Right ventricle myocardium inferior (tissue), 1 donor: ENCODE measurements at regions of chr17 and their contacts with region 1.

Region 1: GRCh38 chr17:48892940-48893645 is 506 bp downstream of the ATP5MC1 start:
- DNase-seq: no peak
- ATAC-seq: no peak

Region 2: DNA sequence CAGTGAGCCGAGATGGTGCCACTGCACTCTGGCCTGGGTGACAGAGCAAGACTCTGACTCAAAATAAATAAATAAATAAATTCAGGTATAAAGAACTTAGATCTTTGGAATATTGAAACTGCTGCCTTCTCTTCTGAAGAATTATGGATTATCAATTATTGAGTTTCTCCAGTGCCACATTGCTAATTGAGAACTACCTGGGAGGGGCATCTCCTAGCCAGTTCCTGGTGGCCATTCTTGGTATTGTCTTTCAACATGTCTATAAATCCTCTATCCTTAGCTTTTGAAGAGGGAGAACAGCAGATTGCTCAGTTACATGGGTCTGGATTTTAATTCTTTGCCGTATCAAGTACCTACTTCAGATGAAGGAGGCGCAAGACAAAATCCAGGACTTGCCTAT is 33.1 kb before region 1 on chr17:
- intact Hi-C with region 1: no loop called
- DNase-seq: no peak
- ATAC-seq: no peak

Region 3: DNA sequence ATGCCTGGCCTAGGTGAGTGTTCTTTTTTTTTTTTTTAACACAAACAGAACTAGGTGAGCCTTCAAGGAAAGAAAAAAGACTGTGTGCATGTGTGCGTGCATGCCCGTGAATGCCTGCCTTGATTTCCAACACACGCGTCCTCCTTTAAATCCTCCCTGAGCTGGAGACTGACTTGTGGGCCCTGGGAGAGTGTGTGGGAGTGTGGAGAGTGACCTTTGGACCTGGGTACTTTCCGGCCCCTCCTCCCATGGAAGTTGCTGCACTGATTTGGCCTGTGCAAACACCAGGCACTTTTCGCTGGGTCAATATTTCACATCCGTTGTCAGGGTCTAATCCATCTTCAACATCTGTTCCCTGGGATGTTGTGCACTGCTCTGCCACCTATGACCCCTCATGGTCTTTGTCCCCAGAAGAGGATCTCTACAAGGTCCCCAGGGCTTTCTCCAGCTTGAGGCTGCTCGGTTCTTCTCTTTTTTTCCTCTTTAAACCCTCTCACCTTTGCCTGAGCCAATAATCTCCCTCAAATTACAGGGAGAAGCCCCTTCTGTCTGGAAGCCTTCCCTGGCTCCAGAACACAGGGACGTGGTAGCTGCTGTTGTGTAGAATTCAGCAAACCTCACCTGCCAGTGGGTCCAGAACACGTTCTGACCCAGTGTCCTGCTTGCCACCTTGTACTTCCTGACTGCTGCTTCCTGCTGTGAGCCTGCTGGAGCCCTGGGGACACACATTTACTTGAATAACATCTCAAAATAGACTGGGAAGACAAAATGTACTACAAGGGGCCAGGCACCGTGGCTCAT is 21.3 kb before region 1 on chr17:
- intact Hi-C with region 1: loop called (anchors 1 kb)
- DNase-seq: no peak
- ATAC-seq: peak; percentile 53

Region 4: DNA sequence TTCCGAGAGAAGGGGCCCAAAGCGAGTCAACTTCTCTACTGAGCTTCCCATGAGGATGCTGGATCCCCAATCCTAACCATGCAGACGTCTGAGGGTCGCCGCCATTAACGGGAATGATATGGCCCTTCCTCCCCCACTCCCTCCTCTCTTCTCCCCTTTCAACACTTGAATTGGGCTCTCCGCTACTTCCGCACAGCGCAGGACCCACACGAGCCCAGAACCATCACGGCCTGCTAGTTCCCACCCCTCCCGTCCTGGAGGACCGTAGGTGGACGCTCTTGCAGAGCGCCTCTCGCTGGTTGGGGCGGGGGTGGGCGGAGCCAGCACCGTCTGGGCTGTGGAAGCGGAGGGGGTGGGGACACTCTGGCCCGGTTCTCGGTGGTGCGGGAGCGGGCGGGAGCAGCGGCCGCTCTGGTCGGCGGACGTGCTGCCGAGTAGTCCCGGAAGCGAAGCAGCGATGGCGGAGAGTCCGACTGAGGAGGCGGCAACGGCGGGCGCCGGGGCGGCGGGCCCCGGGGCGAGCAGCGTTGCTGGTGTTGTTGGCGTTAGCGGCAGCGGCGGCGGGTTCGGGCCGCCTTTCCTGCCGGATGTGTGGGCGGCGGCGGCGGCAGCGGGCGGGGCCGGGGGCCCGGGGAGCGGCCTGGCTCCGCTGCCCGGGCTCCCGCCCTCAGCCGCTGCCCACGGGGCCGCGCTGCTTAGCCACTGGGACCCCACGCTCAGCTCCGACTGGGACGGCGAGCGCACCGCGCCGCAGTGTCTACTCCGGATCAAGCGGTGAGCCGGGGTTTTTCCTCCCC is 15.2 kb after region 1 on chr17 and contains the start of gene UBE2Z:
- intact Hi-C with region 1: loop called (anchors 1 kb)
- DNase-seq: peak; percentile 95
- ATAC-seq: peak; percentile 98
- total RNA-seq, gene UBE2Z: 37.4 TPM

Region 5: GRCh38 chr17:48944519-48945260 is 51.6 kb after region 1 on chr17 and contains the start of gene SNF8:
- intact Hi-C with region 1: loop called (anchors 1 kb)
- DNase-seq: peak; percentile 97
- ATAC-seq: peak; percentile 96
- total RNA-seq, gene SNF8: 104 TPM

Region 6: GRCh38 chr17:48961516-48962233 is 68.6 kb after region 1 on chr17:
- intact Hi-C with region 1: no loop called
- DNase-seq: no peak
- ATAC-seq: no peak

Region 7: GRCh38 chr17:48997083-48997826 is 104.2 kb after region 1 on chr17 and contains the start of gene IGF2BP1:
- intact Hi-C with region 1: no loop called
- DNase-seq: no peak
- ATAC-seq: peak; percentile 39
- total RNA-seq, gene IGF2BP1: not detected

Region 8: DNA sequence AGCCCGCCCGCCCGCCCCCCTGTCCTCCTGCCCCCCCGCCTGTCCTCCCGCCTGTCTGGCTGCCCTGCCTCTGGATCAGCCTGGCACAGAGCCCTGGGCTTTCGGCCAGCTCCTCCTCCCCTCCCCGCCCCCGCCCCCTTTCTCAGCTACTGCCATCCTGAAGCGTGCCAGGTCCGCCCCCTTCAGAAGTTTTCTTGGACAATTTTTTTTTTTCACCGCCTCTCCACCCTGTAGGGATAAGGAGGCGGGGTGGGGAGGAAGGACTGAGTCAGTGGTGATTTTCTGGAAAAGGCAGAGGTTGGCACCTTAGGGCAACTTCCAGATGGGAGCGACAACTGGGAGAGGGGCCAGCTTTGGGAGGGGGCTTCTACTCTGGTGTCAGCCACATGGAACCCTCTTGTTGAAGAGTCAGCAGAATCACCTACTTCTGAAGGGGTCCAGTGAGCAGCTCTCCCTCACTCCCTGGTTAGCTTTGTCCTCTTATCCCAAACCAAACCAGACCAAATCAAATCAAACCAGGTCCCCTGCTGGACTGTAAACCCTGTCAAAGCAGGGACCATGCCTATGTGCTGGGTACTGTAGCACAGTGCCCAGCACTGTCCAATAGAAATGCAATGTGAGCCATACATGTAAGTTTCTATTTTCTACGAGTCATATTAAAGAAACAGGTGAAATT is 123.8 kb after region 1 on chr17:
- intact Hi-C with region 1: no loop called
- DNase-seq: peak; percentile 60
- ATAC-seq: no peak